ENCODE measurements at regions of chr19 and their contacts with region 1.

Region 1: GRCh38 chr19:7607874-7608560 is 12.4 kb downstream of the CAMSAP3 start:
- DNase-seq: no peak
- ATAC-seq: no peak
- H3K4me3 ChIP-seq: no peak overlapping the region
- H3K4me3 Mint-ChIP-seq: no peak overlapping the region
- H3K27ac ChIP-seq: no peak overlapping the region
- H3K27ac Mint-ChIP-seq: no peak overlapping the region
- H3K4me1 ChIP-seq: no peaks in the 10 kb centered on the region
- H3K4me1 Mint-ChIP-seq: no peaks in the 10 kb centered on the region
- H3K27me3 ChIP-seq: peaks cover 0 to 6% of the 10 kb centered on the region in 2 experiments
- H3K27me3 Mint-ChIP-seq: peaks cover 10% of the 10 kb centered on the region
- CTCF ChIP-seq: no peak

Region 2: GRCh38 chr19:7629347-7630054 is 21.5 kb after region 1 on chr19 and contains the starts of genes PET100 and XAB2:
- CTCF ChIA-PET with region 1: no interaction called
- POLR2A ChIA-PET with region 1: interaction called, 3 read pairs
- intact Hi-C with region 1: loop called in 1 of 2 experiments (anchors 1 kb)
- DNase-seq: peak; percentile 90 to 99 (median 94)
- ATAC-seq: peak; percentile 94
- H3K4me3 ChIP-seq: peak within 1 kb of the TSS; percentile 98 to 100
- H3K4me3 Mint-ChIP-seq: peak within 1 kb of the TSS; percentile 97
- H3K27ac ChIP-seq: peak within 1 kb of the TSS; percentile 92 to 99
- H3K27ac Mint-ChIP-seq: peak within 1 kb of the TSS; percentile 99
- H3K4me1 ChIP-seq: peaks cover 27% of the 10 kb centered on the region
- H3K4me1 Mint-ChIP-seq: peaks cover 36% of the 10 kb centered on the region
- H3K27me3 ChIP-seq: no peaks in the 10 kb centered on the region
- H3K27me3 Mint-ChIP-seq: no peaks in the 10 kb centered on the region
- CTCF ChIP-seq: no peak
- total RNA-seq, gene PET100: 186 to 188 TPM
- total RNA-seq, gene XAB2: 127 to 133 TPM